ENCODE measurements at regions of chr22 and their contacts with region 1.

Region 1: GRCh38 chr22:30947816-30948454 is 20.6 kb downstream of the MORC2 start:
- DNase-seq: no peak
- ATAC-seq: peak; percentile 43 to 78 (median 65)
- H3K4me3 ChIP-seq: no peak overlapping the region
- H3K27ac ChIP-seq: peak overlapping the region in 10 of 12 donors; percentile 30 to 76 (median 54)
- H3K4me1 ChIP-seq: peaks cover 0 to 34% (median 24%) of the 10 kb centered on the region in 12 donors
- H3K27me3 ChIP-seq: no peaks in the 10 kb centered on the region
- CTCF ChIP-seq: peak; percentile 47 to 80 (median 66)
- POLR2A ChIP-seq: no peak

Region 2: GRCh38 chr22:30968924-30969539 is 21.1 kb after region 1 on chr22 and contains the start of gene TUG1:
- intact Hi-C with region 1: loop called in 1 of 10 experiments (anchors 2 kb)
- DNase-seq: peak; percentile 99
- ATAC-seq: peak; percentile 97 to 99 (median 98)
- H3K4me3 ChIP-seq: peak within 1 kb of the TSS; percentile 53 to 94 (median 84)
- H3K27ac ChIP-seq: peak within 1 kb of the TSS; percentile 89 to 99 (median 96)
- H3K4me1 ChIP-seq: peaks cover 0 to 61% (median 34%) of the 10 kb centered on the region in 12 donors
- H3K27me3 ChIP-seq: no peaks in the 10 kb centered on the region
- CTCF ChIP-seq: no peak
- POLR2A ChIP-seq: peak; percentile 72 to 92
- total RNA-seq, gene TUG1: 32.8 to 48.9 (median 43.3) TPM

Region 3: GRCh38 chr22:31080848-31081649 is 133.1 kb after region 1 on chr22 and contains the start of gene SMTN:
- intact Hi-C with region 1: loop called (anchors 1 to 2 kb)
- DNase-seq: peak; percentile 94 to 97 (median 94)
- ATAC-seq: peak; percentile 70 to 87 (median 84)
- H3K4me3 ChIP-seq: peak within 1 kb of the TSS; percentile 70 to 100 (median 78)
- H3K27ac ChIP-seq: peak within 1 kb of the TSS; percentile 80 to 99 (median 94)
- H3K4me1 ChIP-seq: peaks cover 1 to 49% (median 37%) of the 10 kb centered on the region in 12 donors
- H3K27me3 ChIP-seq: no peaks in the 10 kb centered on the region
- CTCF ChIP-seq: no peak
- POLR2A ChIP-seq: peak; percentile 88 to 99
- total RNA-seq, gene SMTN: 114 to 270 (median 167) TPM

Region 4: GRCh38 chr22:31107178-31107893 is 159.4 kb after region 1 on chr22 and contains the start of gene SELENOM:
- intact Hi-C with region 1: loop called in 2 of 10 experiments (anchors 5 kb)
- DNase-seq: peak; percentile 97 to 98 (median 97)
- ATAC-seq: peak; percentile 92 to 95 (median 94)
- H3K4me3 ChIP-seq: peak within 1 kb of the TSS; percentile 56 to 95 (median 74)
- H3K27ac ChIP-seq: peak within 1 kb of the TSS; percentile 88 to 99 (median 93)
- H3K4me1 ChIP-seq: peaks cover 0 to 45% (median 20%) of the 10 kb centered on the region in 12 donors
- H3K27me3 ChIP-seq: no peaks in the 10 kb centered on the region
- CTCF ChIP-seq: peak; percentile 88 to 99 (median 96)
- POLR2A ChIP-seq: peak in 1 of 2 donors; percentile 83
- total RNA-seq, gene SELENOM: 35.0 to 183 (median 52.9) TPM

Region 5: DNA sequence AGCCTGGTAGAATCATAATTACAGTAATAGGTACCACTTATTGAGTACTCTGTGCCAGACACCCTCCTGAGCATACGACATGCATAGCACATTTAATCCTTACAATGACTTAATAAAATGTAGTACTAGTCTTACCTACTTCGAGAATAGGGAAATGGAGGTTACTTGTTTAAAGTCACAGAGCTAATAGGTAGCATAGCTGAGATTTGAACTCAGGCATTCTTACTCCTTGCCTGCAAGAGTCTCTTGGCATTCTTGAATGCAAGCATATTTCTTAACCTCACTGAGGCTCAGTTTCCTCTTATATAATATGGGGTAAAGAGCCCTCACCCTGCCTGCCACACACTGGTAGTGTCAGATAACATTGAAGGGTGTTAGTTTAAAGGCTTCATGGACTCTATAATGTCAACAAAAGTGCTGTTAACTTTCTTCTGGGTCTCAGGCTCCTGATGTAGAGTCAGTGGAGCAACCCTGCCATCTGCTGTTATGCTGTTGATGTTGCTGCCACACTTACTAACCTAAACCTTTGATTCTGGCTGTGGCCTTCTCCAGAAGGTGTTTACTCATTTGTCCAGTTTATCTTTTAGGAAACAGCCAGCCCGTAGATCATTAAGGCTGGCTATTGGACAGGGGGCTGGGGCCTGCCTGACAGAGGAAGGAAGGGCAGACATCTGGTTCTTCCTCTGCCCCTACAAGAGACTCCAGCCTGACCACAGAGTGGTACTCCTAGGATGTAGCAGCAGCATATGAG is 283.1 kb after region 1 on chr22:
- intact Hi-C with region 1: loop called in 5 of 10 experiments (anchors 10 kb)
- DNase-seq: peak in 2 of 5 donors; percentile 46
- ATAC-seq: peak; percentile 73 to 77 (median 76)
- H3K4me3 ChIP-seq: no peak overlapping the region
- H3K27ac ChIP-seq: peak overlapping the region in 11 of 12 donors; percentile 61 to 95 (median 70)
- H3K4me1 ChIP-seq: peaks cover 5 to 80% (median 35%) of the 10 kb centered on the region in 12 donors
- H3K27me3 ChIP-seq: no peaks in the 10 kb centered on the region
- CTCF ChIP-seq: peak; percentile 53 to 82 (median 68)
- POLR2A ChIP-seq: no peak

Region 6: DNA sequence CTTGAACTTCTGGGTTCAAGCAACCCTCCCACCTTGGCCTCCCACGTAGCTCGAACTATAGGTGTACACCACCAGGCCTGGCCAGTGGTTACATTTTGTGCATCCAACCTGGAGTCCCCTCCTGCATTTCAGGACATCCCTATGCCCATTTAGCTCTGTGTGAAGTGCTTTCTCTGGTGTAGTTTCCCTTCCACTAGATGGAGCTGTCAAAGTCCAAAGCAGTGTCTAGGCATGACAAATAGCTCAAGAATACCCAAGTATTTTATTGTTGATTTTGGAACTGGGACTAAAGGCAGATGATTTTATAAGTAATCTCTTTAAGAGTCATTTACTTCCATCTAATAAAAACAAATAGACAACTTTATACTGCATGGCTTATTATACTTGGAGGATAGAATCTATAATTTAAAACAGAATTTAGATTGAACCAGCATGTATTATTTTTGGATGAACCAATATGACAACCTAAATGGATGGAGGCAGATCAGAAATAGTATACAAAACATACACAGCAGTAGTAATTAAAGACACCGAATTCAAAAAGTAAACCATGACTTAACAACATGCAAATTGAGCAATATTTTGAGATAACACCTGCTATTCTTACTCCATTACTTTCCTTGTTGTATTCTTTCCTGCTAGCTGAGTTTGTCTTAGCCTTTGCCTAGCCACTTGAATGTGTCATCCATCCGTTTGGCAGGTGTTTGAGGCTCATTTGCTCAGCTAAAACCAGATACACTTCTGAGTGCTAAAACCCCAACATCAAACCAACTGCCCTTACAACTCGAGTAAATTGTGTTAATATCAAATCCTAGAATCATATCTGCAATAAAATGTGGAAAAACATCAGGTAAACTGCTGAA is 504.0 kb after region 1 on chr22:
- intact Hi-C with region 1: no loop called
- DNase-seq: no peak
- ATAC-seq: peak in 3 of 4 donors; percentile 30 to 49 (median 38)
- H3K4me3 ChIP-seq: no peak overlapping the region
- H3K27ac ChIP-seq: peak overlapping the region in 1 of 12 donors; percentile 9
- H3K4me1 ChIP-seq: peaks cover 0 to 38% (median 14%) of the 10 kb centered on the region in 12 donors
- H3K27me3 ChIP-seq: no peaks in the 10 kb centered on the region
- CTCF ChIP-seq: peak in 9 of 12 donors; percentile 21 to 48 (median 32)
- POLR2A ChIP-seq: no peak